A673 (cell line): ENCODE measurements at regions of chr7 and their contacts with region 1.

Region 1: DNA sequence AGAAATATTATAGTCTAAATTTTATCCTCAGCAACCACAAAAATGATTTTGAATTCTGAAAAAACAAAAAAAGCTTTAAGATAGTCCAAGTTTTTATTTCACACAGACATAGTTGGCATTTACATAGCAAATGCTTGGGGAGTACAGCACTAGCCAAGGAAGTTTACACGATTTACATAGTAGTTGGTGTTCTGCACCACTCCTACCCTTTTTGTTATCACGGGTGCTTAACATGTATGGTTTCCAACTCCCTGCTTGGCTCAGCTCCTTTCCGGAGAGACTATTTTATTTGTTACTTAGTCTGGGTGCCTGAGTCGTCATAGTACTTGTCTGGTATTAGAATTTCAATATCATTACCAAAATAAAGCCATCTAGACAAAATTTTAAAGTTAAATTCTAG is 8.8 kb upstream of the GHRHR start:
- DNase-seq: no peak
- H3K4me3 ChIP-seq: no peak overlapping the region
- H3K27ac ChIP-seq: no peak overlapping the region
- H3K4me1 ChIP-seq: no peaks in the 10 kb centered on the region
- H3K27me3 ChIP-seq: peaks cover 22% of the 10 kb centered on the region
- CTCF ChIP-seq: no peak

Region 2: DNA sequence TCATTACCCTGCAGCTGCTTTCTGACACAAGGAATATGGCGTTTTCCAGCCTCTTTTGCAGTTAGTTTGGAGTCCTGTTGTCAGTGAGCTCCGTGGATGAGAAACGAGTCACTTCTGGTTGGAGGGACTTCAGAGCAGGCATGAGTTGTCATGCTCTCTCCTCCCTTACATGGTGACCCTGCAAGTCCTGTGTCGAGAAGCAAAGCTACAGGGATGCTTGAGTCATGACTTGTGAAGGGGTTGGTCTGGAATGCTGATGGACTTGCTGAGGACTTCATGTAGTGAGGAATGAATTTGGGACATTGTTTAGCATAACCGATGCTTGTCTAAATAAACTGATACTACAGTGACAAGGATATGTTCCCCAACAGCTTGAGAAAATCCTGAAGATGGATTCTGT is 206.0 kb after region 1 on chr7:
- CTCF ChIA-PET with region 1: no interaction called
- POLR2A ChIA-PET with region 1: interaction called, 10 read pairs
- intact Hi-C with region 1: no loop called
- DNase-seq: no peak
- H3K4me3 ChIP-seq: no peak overlapping the region
- H3K27ac ChIP-seq: no peak overlapping the region
- H3K4me1 ChIP-seq: no peaks in the 10 kb centered on the region
- H3K27me3 ChIP-seq: no peaks in the 10 kb centered on the region
- CTCF ChIP-seq: no peak

Region 3: GRCh38 chr7:31186202-31186601 is 231.3 kb after region 1 on chr7:
- CTCF ChIA-PET with region 1: no interaction called
- POLR2A ChIA-PET with region 1: no interaction called
- intact Hi-C with region 1: no loop called
- DNase-seq: no peak
- H3K4me3 ChIP-seq: no peak overlapping the region
- H3K27ac ChIP-seq: no peak overlapping the region
- H3K4me1 ChIP-seq: no peaks in the 10 kb centered on the region
- H3K27me3 ChIP-seq: no peaks in the 10 kb centered on the region
- CTCF ChIP-seq: no peak

Region 4: DNA sequence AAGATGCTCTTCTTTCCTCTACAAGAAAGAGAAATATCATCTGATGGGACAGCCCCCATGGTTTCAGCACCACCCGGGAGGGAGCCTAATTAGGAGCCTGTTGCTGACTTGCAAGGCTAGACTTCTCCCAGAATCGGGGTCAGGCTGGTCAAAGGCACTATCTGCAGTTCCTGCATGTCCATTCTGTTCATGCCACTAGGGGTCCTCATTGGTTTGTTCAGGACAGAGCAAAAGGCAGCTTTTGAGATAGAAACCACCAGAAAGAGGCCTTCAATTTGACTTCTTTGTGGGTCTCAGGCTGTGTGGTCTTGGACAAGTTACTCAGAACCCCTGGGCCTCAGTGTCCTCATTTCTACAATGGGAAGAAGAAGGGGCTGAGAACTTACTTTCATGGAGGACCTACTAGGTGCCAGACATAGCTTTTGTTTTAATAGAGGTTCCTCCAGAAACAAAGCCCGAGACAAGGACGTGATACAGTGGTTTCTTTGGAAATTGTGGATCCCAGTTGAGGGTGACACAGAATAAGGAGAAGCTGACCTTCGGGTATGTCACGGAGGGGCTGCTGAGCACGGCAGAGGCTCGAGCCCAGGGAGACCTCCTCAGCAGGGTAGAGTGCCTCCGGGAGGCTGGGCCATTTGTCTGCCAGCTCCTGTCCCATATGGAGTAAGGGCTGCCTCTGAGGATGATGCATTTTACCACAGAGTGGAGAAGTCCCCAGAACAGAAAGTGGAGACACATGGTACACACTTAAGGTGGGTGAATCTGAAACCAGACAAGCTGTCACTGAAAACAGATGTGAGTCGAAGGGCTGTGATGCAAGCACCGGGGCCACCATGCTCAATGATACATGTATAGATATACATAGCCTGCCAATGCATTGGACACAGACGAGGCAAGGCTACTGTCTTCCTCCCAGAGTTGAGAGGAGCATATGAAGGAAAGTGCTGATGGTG is 418.7 kb after region 1 on chr7:
- CTCF ChIA-PET with region 1: no interaction called
- POLR2A ChIA-PET with region 1: no interaction called
- intact Hi-C with region 1: no loop called
- DNase-seq: peak; percentile 85
- H3K4me3 ChIP-seq: no peak overlapping the region
- H3K27ac ChIP-seq: peak overlapping the region; percentile 10
- H3K4me1 ChIP-seq: peaks cover 9% of the 10 kb centered on the region
- H3K27me3 ChIP-seq: no peaks in the 10 kb centered on the region
- CTCF ChIP-seq: peak; percentile 85

Region 5: DNA sequence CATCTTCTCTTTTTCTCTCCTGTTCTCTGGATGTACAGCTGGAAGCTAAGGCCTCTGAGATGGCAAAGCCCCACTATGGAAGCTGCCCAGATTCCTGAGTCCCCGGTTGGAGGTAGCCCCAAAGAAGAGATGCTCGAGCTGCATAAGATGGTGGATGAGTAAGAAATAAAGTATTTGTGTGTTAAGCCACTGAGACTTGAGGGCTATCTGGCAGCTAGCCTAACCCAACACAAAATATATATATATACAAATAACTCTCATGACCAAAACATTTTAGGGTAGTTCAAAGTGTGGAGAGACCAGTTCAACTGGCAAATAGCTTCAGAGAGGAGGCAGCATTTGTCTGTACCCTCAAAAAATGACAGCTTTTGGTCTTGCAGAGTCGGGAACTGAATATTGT is 1187.7 kb after region 1 on chr7:
- CTCF ChIA-PET with region 1: no interaction called
- POLR2A ChIA-PET with region 1: no interaction called
- intact Hi-C with region 1: no loop called
- DNase-seq: no peak
- H3K4me3 ChIP-seq: no peak overlapping the region
- H3K27ac ChIP-seq: no peak overlapping the region
- H3K4me1 ChIP-seq: no peaks in the 10 kb centered on the region
- H3K27me3 ChIP-seq: peaks cover 37% of the 10 kb centered on the region
- CTCF ChIP-seq: no peak